ENCODE measurements at regions of chr12 and their contacts with region 1.

Region 1: DNA sequence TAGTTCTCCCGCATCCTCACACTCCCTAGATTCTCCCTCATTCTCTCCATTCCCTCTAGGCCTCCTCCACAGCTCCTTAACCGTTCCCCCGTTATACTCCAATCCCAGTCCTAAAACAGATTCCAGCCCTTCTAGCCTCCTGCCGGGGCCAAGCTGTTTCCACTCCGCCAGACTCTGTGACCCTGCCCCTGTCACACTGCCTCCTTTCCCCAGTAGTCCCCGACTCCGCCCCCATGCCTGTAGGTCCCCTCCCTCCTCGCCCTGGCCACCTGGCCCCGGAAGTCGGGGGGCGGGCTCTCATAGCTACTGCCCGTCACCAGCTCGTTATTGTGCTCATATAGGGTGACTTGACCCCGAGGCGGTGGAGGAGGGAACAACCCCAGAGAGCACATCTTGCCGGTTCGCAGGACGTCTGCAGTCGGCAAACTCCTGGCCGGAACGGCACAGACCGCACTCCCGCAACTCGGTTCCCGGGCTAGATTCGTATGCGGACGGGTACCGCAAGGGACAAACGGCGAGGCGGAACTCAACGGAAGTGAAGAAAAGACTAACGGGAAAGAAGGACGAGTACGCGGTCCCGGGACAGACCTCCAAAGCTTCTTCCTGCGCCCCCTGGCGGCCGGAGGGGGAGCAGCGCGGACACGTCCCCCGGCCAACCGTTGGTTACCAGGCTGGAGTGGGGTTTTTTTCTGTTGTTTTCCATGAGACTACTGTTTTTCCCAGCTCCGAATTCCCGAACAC is at the start of gene AAAS:
- DNase-seq: peak; percentile 99
- ATAC-seq: peak; percentile 86
- H3K4me3 Mint-ChIP-seq: peak within 1 kb of the TSS; percentile 92
- H3K27ac Mint-ChIP-seq: peak within 1 kb of the TSS; percentile 97
- H3K4me1 Mint-ChIP-seq: peaks cover 39% of the 10 kb centered on the region
- H3K27me3 Mint-ChIP-seq: no peaks in the 10 kb centered on the region
- total RNA-seq, gene AAAS: 60.9 to 61.7 TPM

Region 2: DNA sequence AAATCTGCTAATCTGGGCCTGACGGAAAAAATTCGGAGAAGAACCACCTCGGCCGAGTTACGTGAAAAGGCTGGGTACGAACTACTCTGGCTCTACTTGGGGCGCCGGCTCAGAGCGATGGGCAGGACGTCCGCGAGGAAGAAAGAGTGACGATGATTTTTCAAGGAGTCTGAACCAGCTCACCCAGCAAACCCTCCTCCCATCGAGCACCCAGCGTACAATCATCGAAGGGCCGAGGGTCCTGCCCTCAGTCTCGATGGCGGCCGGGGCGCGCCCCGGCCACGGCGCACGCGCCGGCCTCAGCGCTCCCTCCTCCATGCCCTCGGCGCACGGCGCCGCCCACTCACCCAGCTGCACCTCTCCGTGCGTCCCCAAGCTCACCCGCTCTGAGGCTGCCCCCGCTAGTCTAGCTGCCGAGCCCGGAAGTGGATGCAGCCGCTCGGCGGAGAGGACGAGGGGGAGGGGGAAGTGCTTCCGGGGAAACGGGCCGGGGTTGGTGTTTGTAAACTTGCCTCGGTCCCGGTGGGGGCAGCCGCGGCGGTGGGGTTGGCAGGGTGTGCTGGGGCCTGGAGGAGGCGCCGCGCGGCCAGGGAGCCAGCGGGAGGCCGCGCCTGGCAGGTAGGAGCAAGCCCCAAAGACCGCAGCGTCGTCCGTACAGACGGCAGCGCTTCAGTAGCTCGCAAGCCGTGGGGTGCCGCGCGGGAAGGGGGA is 140.9 kb before region 1 on chr12 and contains the starts of genes CSAD and ZNF740:
- CTCF ChIA-PET with region 1: interaction called, 11 read pairs
- DNase-seq: peak; percentile 99
- ATAC-seq: peak; percentile 98
- H3K4me3 Mint-ChIP-seq: peak within 1 kb of the TSS; percentile 85
- H3K27ac Mint-ChIP-seq: peak within 1 kb of the TSS; percentile 98
- H3K4me1 Mint-ChIP-seq: peaks cover 50% of the 10 kb centered on the region
- H3K27me3 Mint-ChIP-seq: no peaks in the 10 kb centered on the region
- total RNA-seq, gene CSAD: 19.6 to 28.1 TPM
- total RNA-seq, gene ZNF740: 35.8 to 47.0 TPM

Region 3: GRCh38 chr12:53220801-53221202 is 100.4 kb before region 1 on chr12:
- CTCF ChIA-PET with region 1: interaction called, 18 read pairs
- DNase-seq: peak; percentile 92
- ATAC-seq: peak; percentile 71
- H3K4me3 Mint-ChIP-seq: peak overlapping the region; percentile 89
- H3K27ac Mint-ChIP-seq: peak overlapping the region; percentile 98
- H3K4me1 Mint-ChIP-seq: peaks cover 72% of the 10 kb centered on the region
- H3K27me3 Mint-ChIP-seq: no peaks in the 10 kb centered on the region

Region 4: DNA sequence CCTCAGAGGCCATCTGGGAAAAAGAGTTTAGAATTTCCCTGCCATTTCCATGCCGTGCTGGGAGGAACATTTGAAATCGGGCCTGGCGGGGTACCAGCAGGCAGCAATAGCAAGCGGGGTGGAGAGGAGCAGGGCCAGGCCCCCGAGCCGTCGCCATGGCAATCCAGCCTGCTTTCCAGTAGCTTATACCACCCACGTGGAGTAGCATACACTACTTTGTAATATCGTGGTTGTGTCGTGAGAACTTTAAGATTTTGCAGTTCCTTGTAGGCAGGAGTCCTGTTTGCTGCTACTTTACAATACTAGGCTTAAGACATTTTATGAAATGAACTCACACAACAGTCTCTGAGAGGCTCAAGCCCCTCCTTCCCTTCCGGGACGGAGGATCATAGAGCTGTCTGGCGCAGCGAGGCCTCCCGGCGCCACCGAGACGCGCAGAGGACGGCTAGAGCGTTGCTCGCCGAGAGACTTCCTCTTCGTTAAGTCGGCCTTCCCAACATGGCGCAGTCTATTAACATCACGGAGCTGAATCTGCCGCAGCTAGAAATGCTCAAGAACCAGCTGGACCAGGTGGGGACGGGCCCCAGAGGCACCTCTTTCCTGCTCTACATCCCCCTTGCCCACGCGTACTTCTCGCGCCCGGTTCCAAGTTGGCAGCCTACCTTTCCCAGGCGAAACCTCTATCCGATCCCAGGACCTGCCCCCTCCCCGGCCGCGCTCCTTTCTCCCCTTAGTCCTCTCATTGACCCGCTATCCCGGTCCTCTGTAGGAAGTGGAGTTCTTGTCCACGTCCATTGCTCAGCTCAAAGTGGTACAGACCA is 26.0 kb before region 1 on chr12 and contains the start of gene PFDN5:
- CTCF ChIA-PET with region 1: interaction called, 83 read pairs
- DNase-seq: peak; percentile 93
- ATAC-seq: peak; percentile 88
- H3K4me3 Mint-ChIP-seq: peak within 1 kb of the TSS; percentile 98
- H3K27ac Mint-ChIP-seq: peak within 1 kb of the TSS; percentile 92
- H3K4me1 Mint-ChIP-seq: peaks cover 49% of the 10 kb centered on the region
- H3K27me3 Mint-ChIP-seq: no peaks in the 10 kb centered on the region
- total RNA-seq, gene PFDN5: 283 to 298 TPM

Region 5: GRCh38 chr12:53344824-53345485 is 23.7 kb after region 1 on chr12:
- CTCF ChIA-PET with region 1: interaction called, 232 read pairs
- DNase-seq: peak; percentile 82
- ATAC-seq: peak; percentile 83
- H3K4me3 Mint-ChIP-seq: peak overlapping the region; percentile 79
- H3K27ac Mint-ChIP-seq: peak overlapping the region; percentile 71
- H3K4me1 Mint-ChIP-seq: peaks cover 21% of the 10 kb centered on the region
- H3K27me3 Mint-ChIP-seq: peaks cover 12% of the 10 kb centered on the region

Region 6: DNA sequence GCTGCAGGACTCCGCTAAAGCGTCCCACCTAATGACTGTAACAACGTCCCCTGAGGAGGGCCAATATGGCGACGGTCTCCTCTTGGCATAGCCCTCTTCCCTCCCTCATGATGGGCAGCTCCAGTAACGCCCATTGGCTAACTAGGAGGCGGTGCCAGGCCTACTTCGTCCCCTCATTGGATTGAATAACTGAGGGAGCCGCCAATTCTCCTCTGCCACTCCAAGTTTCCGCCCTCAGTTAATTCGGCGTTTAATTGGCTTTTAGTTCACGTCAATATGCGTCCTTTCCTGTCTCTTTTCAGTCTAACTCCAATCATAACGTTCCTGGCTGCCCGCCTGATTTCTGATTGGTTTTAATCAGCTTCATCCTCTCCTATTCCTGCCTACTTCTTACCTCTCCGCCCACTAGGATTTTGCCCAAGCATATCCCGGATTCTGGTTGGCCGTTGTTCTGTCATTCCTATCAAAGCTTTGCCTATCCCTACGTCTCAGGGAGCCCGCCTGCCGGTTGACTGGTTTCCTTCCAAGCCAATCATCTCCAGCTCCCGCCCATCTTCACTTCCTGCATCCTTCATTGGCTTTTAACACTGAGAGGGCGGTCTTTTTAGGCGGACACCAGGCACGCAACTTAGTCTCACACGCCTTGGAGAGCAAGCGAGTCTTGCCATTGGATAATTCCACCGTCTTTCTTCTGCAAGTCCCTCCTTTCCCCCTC is 58.3 kb after region 1 on chr12:
- CTCF ChIA-PET with region 1: interaction called, 31 read pairs
- DNase-seq: peak; percentile 99
- ATAC-seq: peak; percentile 77
- H3K4me3 Mint-ChIP-seq: no peak overlapping the region
- H3K27ac Mint-ChIP-seq: no peak overlapping the region
- H3K4me1 Mint-ChIP-seq: peaks cover 34% of the 10 kb centered on the region
- H3K27me3 Mint-ChIP-seq: no peaks in the 10 kb centered on the region

Region 7: DNA sequence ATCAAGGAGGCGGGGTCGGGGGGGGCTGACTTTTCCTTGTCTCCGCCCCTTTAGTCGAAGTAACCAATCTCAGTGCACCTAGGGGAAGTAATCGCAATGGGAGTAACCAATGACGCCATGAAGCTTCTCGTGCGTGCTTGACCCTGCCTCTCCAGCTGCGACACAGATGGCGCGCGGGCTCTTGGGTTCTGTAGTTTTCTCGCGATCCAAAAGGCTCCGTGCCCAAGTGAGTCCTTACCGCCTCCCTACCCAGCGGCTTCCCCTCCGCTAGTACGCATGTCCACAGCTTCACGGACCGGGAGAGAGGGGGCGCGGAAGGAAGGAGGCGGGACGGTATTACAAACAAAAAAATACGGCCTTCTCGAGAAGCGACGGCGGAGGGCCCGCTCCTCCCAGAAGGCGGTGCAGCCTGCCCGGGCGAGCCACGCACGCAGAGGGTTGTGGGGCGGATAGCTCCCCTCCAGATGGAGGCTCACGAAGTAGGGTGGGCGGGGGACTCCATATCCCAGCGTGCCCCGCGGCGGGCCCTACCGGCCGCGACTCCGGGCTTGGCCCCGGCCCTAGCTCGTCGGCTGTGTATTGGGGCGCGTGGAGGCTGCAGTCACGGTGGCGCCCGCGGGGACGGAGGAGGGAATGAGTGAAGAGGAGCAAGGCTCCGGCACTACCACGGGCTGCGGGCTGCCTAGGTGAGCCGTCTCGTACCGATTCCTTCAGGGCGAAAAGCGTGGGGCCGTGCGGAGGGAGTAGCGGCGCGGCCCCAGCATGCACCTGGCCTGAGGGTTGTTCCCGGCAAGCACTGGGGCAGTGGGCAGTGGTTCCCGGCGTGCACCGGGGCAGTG is 179.8 kb after region 1 on chr12 and contains the start of gene TARBP2:
- CTCF ChIA-PET with region 1: interaction called, 11 read pairs
- DNase-seq: peak; percentile 98
- ATAC-seq: peak; percentile 82
- H3K4me3 Mint-ChIP-seq: peak within 1 kb of the TSS; percentile 83
- H3K27ac Mint-ChIP-seq: peak within 1 kb of the TSS; percentile 96
- H3K4me1 Mint-ChIP-seq: peaks cover 37% of the 10 kb centered on the region
- H3K27me3 Mint-ChIP-seq: no peaks in the 10 kb centered on the region
- total RNA-seq, gene TARBP2: 29.7 to 38.7 TPM

Region 8: DNA sequence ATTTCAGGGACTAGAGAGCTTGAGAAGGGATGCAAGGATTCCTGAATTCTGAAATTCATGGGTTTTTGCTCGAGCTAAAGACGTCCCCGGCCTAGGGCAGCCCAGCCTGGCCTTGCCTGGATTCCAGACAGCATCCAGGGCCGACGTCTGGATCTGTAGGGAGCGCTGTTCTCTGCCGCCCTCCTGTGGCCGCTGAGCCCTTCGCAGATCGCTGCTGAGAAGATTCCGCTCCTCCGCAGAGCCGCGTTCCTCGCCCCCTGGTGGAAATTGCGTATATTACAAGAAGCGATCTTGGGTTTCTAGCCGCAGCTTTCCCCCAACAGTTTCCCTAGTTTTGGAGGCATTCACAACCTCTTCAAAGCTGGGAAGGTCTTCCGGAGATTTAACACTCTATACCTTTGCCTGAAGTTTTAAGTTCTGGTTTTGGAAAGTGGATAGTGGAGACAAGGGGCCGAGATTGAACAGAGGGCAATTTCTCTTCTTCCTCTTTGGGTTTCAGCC is 425.4 kb after region 1 on chr12:
- CTCF ChIA-PET with region 1: no interaction called
- DNase-seq: peak; percentile 92
- ATAC-seq: peak; percentile 79
- H3K4me3 Mint-ChIP-seq: no peak overlapping the region
- H3K27ac Mint-ChIP-seq: no peak overlapping the region
- H3K4me1 Mint-ChIP-seq: peaks cover 16% of the 10 kb centered on the region
- H3K27me3 Mint-ChIP-seq: peaks cover 39% of the 10 kb centered on the region

Region 9: DNA sequence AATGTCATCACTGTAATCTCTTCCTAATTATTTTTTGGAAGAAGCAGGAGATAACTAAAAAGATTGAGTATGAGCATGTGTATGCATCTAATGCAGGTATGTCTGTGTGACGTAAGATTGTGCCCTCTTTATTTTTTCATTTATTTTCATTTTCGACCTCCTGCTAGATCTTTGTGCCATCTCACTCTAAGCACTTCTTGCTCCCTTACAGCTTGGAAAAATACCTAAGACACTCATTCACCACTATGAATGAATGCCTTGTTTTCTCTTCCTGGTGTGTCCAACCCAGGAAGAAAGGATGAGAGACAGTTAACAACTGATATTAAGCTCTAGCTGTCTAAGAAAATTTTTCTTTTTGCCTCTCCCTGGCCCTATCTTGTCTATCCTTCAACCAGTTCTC is 507.4 kb after region 1 on chr12:
- CTCF ChIA-PET with region 1: no interaction called
- DNase-seq: no peak
- ATAC-seq: no peak
- H3K4me3 Mint-ChIP-seq: no peak overlapping the region
- H3K27ac Mint-ChIP-seq: no peak overlapping the region
- H3K4me1 Mint-ChIP-seq: no peaks in the 10 kb centered on the region
- H3K27me3 Mint-ChIP-seq: peaks cover 45% of the 10 kb centered on the region

Measured in activated CD8-positive, alpha-beta memory T cell treated with anti-CD3 and anti-CD28 coated beads, Interleukin-2, amount 10 ng/mL, durations not matched to agents 7 days and 5 days (primary cell).